Panc1 (cell line): ENCODE measurements at regions of chr15 and their contacts with region 1.

Region 1: DNA sequence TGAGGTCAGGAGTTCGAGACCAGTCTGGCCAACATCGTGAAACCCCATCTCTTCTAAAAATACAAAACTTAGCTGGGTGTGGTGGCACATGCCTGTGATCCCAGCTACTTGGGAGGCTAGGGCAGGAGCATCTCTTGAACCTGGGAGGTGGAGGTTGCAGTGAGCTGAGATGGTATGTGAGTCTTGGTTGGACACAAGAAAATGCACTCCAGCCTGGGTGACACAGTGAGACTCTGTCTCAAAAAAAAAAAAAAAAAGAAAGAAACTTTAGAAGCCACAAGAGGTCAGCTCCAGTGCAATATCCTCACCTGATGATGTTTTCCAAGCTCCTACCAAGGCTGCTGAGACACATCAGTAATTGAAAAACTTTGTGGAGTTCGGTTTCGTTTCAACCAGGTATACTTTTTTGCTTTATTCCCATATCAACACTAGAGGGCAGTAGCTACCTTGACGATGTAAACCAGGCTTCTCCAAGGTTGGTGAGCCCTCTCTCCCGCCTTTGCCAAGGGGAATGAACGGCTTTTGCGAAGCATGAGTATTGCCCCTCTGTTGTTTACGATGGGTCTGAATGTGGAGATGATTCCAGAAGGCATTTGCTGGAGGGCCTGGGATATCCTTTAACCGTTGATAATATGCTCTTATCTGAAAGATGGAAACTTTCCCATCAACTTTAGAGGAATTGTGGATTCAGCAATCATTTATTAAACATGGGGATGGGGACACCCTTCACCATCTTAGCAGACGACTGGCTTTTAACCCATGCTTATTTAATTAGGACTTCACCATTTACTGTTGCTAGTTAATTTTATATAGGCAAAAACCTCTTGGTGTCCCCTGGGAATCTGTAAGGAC is 202.8 kb downstream of the SV2B start:
- DNase-seq: peak; percentile 43
- ATAC-seq: peak; percentile 89
- H3K4me3 ChIP-seq: no peak overlapping the region; a peak in 1 of 4 replicates
- H3K27ac ChIP-seq: no peak overlapping the region
- H3K4me1 ChIP-seq: no peaks in the 10 kb centered on the region
- H3K27me3 ChIP-seq: peaks cover 41% of the 10 kb centered on the region
- CTCF ChIP-seq: peak; percentile 85

Region 2: GRCh38 chr15:91620229-91620628 is 317.4 kb after region 1 on chr15:
- CTCF ChIA-PET with region 1: no interaction called
- POLR2A ChIA-PET with region 1: interaction called, 11 read pairs
- in situ Hi-C with region 1: no loop called
- intact Hi-C with region 1: no loop called
- DNase-seq: no peak
- ATAC-seq: no peak
- H3K4me3 ChIP-seq: no peak overlapping the region
- H3K27ac ChIP-seq: no peak overlapping the region
- H3K4me1 ChIP-seq: no peaks in the 10 kb centered on the region
- H3K27me3 ChIP-seq: no peaks in the 10 kb centered on the region
- CTCF ChIP-seq: no peak

Region 3: DNA sequence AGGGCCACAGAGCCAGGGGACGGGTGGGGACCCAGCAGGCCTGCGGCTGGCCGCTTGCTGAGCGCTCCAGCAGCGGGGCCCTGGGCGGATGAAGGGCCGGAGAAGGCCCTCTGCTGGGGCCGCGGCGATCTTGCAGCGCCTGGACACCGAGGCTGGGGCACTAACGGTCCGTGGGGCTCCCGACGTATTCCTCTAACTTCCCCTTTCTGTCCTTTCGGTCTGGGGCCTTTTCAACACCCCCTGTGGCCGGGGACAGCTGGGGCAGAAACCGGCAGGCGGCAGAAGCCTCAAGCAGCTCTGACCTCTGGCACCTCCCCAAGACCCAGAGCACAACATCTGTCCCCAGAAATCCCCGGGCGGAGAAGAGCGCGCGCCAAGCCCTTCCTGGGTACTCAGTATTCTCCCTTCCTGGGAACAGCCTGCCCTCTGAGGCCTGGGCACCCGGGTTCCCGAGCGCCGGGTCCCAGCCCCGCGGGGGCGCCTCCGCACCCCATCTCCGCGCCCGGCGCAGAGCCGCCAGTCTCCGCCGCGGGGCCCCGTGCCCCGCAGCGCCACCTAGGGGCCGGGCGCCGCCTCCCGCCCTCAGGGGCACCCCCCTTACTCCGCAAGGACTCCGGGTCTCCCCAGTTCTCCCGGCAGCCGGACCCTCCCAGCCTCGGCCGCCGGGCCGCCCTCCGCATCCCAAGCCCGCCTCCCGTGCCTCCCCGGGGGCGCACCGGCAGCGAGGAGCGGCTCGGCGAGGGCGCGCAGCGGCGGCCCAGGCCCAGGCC is 550.1 kb after region 1 on chr15:
- CTCF ChIA-PET with region 1: interaction called, 6 read pairs
- POLR2A ChIA-PET with region 1: no interaction called
- in situ Hi-C with region 1: no loop called
- intact Hi-C with region 1: loop called (anchors 2 kb)
- DNase-seq: no peak
- ATAC-seq: peak; percentile 88
- H3K4me3 ChIP-seq: peak overlapping the region; percentile 64 to 66
- H3K27ac ChIP-seq: peak overlapping the region; percentile 63
- H3K4me1 ChIP-seq: peaks cover 18% of the 10 kb centered on the region
- H3K27me3 ChIP-seq: no peaks in the 10 kb centered on the region
- CTCF ChIP-seq: peak; percentile 97